H1 (cell line): ENCODE measurements at regions of chr1 and their contacts with region 1.

Region 1: GRCh38 chr1:168234846-168235547 is 9.2 kb downstream of the SFT2D2 start:
- DNase-seq: no peak
- H3K4me3 ChIP-seq: no peak overlapping the region
- H3K27ac ChIP-seq: no peak overlapping the region
- H3K4me1 ChIP-seq: no peaks in the 10 kb centered on the region
- H3K27me3 ChIP-seq: no peaks in the 10 kb centered on the region
- CTCF ChIP-seq: peak; percentile 49 to 89 (median 81)
- EP300 ChIP-seq: no peak
- POLR2A ChIP-seq: no peak
- RAD21 ChIP-seq: peak; percentile 69 to 83

Region 2: DNA sequence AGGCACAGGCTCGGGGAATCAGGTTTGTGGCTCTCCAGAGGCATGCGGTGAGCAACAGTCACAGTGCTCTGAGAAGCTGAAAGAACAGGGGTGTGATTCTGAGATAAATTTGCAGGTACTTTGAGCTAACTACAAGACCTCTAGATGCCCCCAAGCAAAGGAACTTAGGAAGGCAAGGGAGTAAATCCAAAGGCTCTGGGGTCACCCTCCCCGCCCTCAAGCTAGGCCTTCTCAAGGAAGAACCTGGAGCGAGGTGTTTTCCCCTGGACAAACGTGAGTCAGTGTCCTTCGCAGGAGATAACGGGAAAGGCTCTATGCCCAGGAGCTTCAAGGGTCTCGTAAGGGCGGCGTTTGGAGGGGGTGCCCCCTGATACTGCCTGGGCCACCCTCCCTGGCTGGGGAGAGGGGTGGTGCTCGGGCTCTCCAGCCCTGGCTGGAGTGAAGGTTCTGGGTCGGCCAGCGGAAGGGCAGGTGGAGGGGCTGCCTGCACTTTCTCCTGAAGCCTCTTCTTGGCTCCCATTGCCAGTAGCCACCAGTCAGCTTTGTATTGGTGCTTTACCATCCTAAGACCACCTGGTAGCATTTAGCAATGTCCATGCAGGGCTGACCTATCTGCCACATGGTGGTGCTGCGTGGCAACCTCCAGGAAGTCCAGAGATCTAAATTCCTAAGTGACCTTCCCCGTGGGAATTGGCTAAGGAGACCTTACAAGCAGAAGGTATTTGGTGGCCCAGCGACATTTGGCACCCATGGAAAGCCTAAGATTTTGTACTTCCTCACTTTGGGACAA is 142.2 kb before region 1 on chr1:
- CTCF ChIA-PET with region 1: interaction called, 20 read pairs
- POLR2A ChIA-PET with region 1: no interaction called
- DNase-seq: no peak
- H3K4me3 ChIP-seq: no peak overlapping the region
- H3K27ac ChIP-seq: no peak overlapping the region
- H3K4me1 ChIP-seq: peaks cover 0 to 3% (median 0%) of the 10 kb centered on the region in 4 experiments; a peak in 1 of 7 replicates
- H3K27me3 ChIP-seq: no peaks in the 10 kb centered on the region
- CTCF ChIP-seq: peak; percentile 55 to 67 (median 57)
- EP300 ChIP-seq: no peak
- POLR2A ChIP-seq: no peak
- RAD21 ChIP-seq: peak; percentile 73 to 77

Region 3: DNA sequence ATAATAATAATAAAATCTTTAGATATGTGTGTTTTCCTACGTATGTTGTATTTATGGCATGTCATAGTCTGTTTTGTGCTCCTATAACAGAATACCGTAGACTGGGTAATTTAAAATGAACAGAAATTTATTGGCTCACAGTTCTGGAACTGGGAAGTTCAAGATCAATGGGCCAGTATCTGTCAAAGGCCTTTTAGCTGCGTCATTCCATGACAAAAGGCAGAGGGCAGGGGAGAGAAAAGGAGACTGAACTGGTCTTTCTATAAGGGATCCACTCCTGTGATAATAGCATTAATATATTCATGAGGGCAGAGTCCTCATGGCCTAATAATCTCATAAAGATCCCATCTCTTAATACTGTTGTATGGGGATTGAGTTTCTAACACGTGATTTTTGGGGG is 16.3 kb before region 1 on chr1:
- CTCF ChIA-PET with region 1: interaction called, 29 read pairs
- POLR2A ChIA-PET with region 1: interaction called, 4 read pairs
- DNase-seq: no peak
- H3K4me3 ChIP-seq: no peak overlapping the region
- H3K27ac ChIP-seq: no peak overlapping the region
- H3K4me1 ChIP-seq: peaks cover 0 to 5% (median 4%) of the 10 kb centered on the region in 4 experiments; a peak in 3 of 7 replicates
- H3K27me3 ChIP-seq: no peaks in the 10 kb centered on the region
- CTCF ChIP-seq: no peak
- EP300 ChIP-seq: no peak
- POLR2A ChIP-seq: no peak
- RAD21 ChIP-seq: no peak

Region 4: DNA sequence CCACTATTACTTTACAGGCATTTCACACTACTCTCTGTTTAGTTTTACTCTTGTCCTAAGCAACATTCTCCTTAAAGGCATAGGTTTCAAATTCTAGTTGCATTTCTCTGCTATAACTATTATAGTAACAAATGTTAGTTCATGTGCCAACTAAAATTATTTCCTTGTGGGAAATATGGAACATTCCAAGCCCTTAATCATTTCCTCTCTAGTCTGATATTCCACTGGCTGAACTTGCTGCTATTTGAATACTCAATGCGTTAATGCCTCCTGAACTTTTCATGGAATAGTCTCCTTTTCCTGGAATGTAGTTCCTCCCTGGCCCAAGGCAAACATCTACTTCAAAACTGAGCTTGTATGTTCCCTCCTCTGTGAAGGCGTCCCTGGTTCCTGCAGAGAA is 26.4 kb after region 1 on chr1:
- CTCF ChIA-PET with region 1: interaction called, 17 read pairs
- POLR2A ChIA-PET with region 1: no interaction called
- DNase-seq: no peak
- H3K4me3 ChIP-seq: no peak overlapping the region
- H3K27ac ChIP-seq: no peak overlapping the region
- H3K4me1 ChIP-seq: peaks cover 1 to 8% (median 4%) of the 10 kb centered on the region in 4 experiments; a peak in 3 of 7 replicates
- H3K27me3 ChIP-seq: no peaks in the 10 kb centered on the region
- CTCF ChIP-seq: no peak
- EP300 ChIP-seq: no peak
- POLR2A ChIP-seq: no peak
- RAD21 ChIP-seq: no peak

Region 5: GRCh38 chr1:168328731-168329399 is 93.9 kb after region 1 on chr1:
- CTCF ChIA-PET with region 1: interaction called, 13 read pairs
- POLR2A ChIA-PET with region 1: no interaction called
- DNase-seq: no peak
- H3K4me3 ChIP-seq: no peak overlapping the region
- H3K27ac ChIP-seq: no peak overlapping the region
- H3K4me1 ChIP-seq: no peaks in the 10 kb centered on the region; a peak in 3 of 7 replicates
- H3K27me3 ChIP-seq: no peaks in the 10 kb centered on the region
- CTCF ChIP-seq: no peak
- EP300 ChIP-seq: no peak
- POLR2A ChIP-seq: no peak
- RAD21 ChIP-seq: no peak